ENCODE measurements at regions of chr12 and their contacts with region 1.

Region 1: DNA sequence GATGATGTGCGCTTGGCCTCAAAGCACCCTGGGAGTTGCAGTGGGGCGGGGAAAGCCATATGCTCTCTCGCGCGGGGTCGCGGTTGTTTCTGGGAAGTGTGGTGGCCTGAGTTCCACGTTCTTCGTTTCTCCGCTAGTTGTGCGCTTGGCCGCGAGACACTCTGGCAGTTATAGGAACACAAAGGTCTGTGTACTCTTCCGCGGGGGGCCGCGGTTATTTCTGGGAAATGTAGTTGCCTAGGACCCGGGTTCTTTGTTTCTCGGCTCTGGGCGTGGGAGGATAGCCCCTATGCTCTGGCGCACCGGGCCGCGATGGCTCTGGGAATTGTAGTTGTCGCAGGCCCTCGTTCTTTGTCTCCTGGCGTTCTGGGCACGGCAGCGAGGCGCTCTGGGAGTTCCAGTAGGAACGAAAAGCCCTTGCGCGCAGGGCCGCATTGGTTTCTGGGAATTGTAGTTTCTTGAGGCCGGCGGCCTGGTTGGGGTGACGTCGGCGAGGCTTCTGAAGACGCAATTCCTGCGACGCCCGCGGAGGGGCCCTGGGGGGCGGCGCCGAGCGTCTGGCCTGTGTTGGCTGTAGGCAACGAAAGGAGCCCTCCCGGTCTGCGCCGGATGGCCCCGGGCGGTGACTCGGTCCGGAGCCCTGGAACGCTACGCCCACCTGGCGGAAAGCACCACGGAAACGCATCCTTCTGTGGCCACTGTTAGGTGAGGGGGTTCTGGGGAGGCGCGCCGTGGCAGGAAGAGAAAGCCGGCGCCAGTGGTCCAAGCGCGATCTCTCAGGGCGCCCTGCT is at the start of gene ZNF140:
- DNase-seq: peak; percentile 89 to 99 (median 94)
- ATAC-seq: peak; percentile 64 to 74 (median 69)
- H3K4me3 ChIP-seq: peak within 1 kb of the TSS; percentile 64 to 72
- H3K4me3 Mint-ChIP-seq: no peak within 1 kb of the TSS
- H3K27ac ChIP-seq: peak within 1 kb of the TSS; percentile 98
- H3K27ac Mint-ChIP-seq: peak within 1 kb of the TSS; percentile 34 to 49
- H3K4me1 ChIP-seq: peaks cover 3 to 22% of the 10 kb centered on the region in 2 experiments
- H3K4me1 Mint-ChIP-seq: peaks cover 0 to 19% (median 14%) of the 10 kb centered on the region in 3 donors
- H3K27me3 ChIP-seq: no peaks in the 10 kb centered on the region
- H3K27me3 Mint-ChIP-seq: no peaks in the 10 kb centered on the region
- total RNA-seq, gene ZNF140: 12.6 to 20.8 (median 20.3) TPM

Region 2: DNA sequence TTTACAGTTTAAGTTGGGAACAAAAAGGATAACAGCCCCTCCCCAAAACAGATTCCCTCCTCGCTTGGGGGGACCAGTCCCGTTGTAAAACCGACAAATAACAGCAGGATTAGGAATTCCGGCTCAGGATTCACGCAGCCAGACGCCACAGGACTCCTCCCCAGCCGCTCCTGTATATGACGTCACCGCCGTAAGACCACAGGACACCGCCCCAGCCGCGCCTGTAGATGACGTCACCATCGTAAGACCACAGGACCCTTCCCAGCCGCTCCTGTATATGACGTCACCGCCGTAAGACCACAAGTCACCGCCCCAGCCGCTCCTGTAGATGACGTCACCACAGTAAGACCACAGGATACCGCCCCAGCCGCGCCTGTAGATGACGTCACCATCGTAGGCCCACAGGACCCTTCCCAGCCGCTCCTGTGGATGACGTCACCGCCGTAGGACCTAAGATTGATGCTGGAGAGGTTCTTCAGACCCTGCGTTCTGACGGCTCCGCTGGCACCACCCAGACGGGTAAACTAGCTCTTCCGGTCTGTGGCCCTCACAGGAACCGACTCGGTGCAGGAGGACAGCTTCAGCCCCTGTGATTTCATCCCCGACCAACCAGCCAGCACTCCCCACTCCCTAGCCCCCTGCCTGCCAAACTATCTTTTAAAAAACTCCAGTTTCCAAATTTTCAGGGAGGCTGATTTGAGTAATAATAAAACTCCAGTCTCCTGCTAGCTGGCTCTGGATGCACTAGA is 634.5 kb before region 1 on chr12:
- CTCF ChIA-PET with region 1: no interaction called
- POLR2A ChIA-PET with region 1: no interaction called
- DNase-seq: peak in 34 of 35 experiments; percentile 35 to 84 (median 67)
- ATAC-seq: peak in 2 of 4 experiments; percentile 5 to 62
- H3K4me3 ChIP-seq: peak overlapping the region in 1 of 2 donors; percentile 54
- H3K4me3 Mint-ChIP-seq: peak overlapping the region; percentile 80 to 93 (median 86)
- H3K27ac ChIP-seq: peak overlapping the region; percentile 98
- H3K27ac Mint-ChIP-seq: peak overlapping the region; percentile 100
- H3K4me1 ChIP-seq: peaks cover 43 to 90% of the 10 kb centered on the region in 2 experiments
- H3K4me1 Mint-ChIP-seq: peaks cover 56 to 61% (median 59%) of the 10 kb centered on the region in 3 donors
- H3K27me3 ChIP-seq: peaks cover 0 to 7% of the 10 kb centered on the region in 2 experiments
- H3K27me3 Mint-ChIP-seq: no peaks in the 10 kb centered on the region

Region 3: DNA sequence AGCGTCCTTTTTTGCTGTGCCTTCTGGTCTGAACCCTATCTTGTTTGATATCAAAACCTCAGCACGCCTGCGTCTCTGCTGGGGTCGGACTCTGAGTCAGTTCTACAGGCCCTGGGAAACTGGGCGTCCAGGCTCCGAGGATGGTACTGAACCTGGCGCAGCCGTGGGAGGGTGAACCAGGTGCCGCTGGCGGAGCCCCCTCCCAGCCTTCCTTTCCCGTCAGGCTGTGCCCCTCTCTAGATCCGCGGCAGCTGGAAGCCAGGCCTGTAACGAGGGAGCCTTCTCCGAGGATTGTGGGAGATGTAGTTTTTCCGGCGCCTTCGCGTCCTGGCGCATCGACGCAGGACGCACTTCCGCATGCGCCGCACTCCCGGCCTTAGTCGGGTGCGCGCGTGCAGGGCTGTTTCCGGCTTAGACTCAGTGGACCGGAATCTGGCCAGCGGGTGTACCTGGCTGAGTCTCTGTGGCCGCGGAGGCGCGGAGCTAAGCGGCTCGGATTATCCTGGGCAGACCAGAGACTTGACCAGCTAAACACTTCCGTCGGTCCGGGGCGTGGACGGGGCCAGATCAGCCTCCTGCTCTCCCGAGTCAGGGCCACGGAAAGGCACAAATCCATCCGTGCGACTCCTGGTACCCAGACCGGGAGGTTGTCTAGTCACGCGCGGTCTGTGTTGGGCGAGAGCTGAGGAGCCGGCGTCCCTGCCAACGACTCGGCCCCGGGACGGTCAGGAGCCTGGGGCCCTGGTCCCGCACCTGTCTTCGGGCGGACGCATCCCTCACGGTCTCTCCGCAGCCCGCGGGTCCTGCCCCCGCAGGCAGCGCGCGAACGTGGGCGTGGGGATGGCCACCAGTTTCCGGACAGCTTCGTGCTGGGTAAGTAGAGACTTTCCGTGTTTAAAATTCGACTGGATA is 94.3 kb before region 1 on chr12 and contains the start of gene ZNF26:
- CTCF ChIA-PET with region 1: interaction called in 1 of 2 experiments, 3 read pairs
- POLR2A ChIA-PET with region 1: interaction called in 1 of 2 experiments, 10 read pairs
- DNase-seq: peak; percentile 75 to 94 (median 85)
- ATAC-seq: peak; percentile 97 to 98 (median 98)
- H3K4me3 ChIP-seq: peak within 1 kb of the TSS; percentile 82 to 94
- H3K4me3 Mint-ChIP-seq: peak within 1 kb of the TSS; percentile 91 to 93 (median 93)
- H3K27ac ChIP-seq: peak within 1 kb of the TSS; percentile 78
- H3K27ac Mint-ChIP-seq: peak within 1 kb of the TSS; percentile 97 to 98
- H3K4me1 ChIP-seq: peaks cover 9 to 26% of the 10 kb centered on the region in 2 experiments
- H3K4me1 Mint-ChIP-seq: peaks cover 34 to 42% (median 36%) of the 10 kb centered on the region in 3 donors
- H3K27me3 ChIP-seq: peaks cover 0 to 2% of the 10 kb centered on the region in 2 experiments
- H3K27me3 Mint-ChIP-seq: peaks cover 2 to 3% of the 10 kb centered on the region in 2 donors
- total RNA-seq, gene ZNF26: 29.2 to 37.2 (median 32.7) TPM

Region 4: GRCh38 chr12:133130038-133130807 is 49.7 kb after region 1 on chr12 and contains the starts of genes ZNF10 and ZNF891:
- CTCF ChIA-PET with region 1: interaction called in 1 of 2 experiments, 5 read pairs
- POLR2A ChIA-PET with region 1: interaction called in 1 of 2 experiments, 16 read pairs
- DNase-seq: peak; percentile 91 to 98 (median 96)
- ATAC-seq: peak; percentile 85 to 94 (median 92)
- H3K4me3 ChIP-seq: peak within 1 kb of the TSS; percentile 80 to 85
- H3K4me3 Mint-ChIP-seq: peak within 1 kb of the TSS; percentile 92 to 97 (median 92)
- H3K27ac ChIP-seq: peak within 1 kb of the TSS; percentile 97
- H3K27ac Mint-ChIP-seq: peak within 1 kb of the TSS; percentile 97 to 98
- H3K4me1 ChIP-seq: peaks cover 5 to 16% of the 10 kb centered on the region in 2 experiments
- H3K4me1 Mint-ChIP-seq: peaks cover 19 to 29% (median 22%) of the 10 kb centered on the region in 3 donors
- H3K27me3 ChIP-seq: no peaks in the 10 kb centered on the region
- H3K27me3 Mint-ChIP-seq: no peaks in the 10 kb centered on the region
- total RNA-seq, gene ZNF10: 11.7 to 46.6 (median 15.6) TPM
- total RNA-seq, gene ZNF891: 4.9 to 6.0 (median 5.1) TPM